ENCODE measurements at regions of chr2 and their contacts with region 1.

Region 1: GRCh38 chr2:64052468-64053241 is 33.4 kb upstream of the VPS54 start:
- DNase-seq: no peak
- H3K4me3 ChIP-seq: no peak overlapping the region
- CTCF ChIP-seq: no peak

Region 2: DNA sequence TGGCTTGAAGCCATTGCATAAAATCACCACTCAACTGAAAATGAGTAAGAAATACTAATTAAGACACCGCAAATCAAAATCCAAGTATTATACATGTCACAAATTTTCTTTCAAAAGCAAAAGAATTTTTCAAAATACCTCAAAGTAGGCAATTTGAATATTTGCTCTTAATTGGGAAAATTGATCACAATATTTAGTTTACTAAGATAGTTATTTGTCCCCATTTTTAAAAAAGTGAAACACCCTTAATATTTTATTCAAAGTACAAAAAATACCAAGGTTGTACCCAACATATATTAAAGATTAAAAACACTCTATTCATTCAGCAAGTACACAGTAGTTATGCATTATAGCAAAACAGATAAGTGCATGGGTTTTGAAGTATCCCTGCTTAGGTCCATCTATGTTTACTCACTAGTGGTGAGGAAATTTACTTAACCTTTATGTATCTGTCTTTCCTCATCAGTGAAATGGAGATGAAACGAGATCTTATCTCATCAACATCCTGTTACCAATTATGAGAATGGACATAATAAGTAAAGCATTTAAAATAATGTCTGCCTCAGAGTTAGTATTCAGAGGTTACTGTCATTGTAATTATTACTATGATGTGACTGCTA is 68.6 kb before region 1 on chr2:
- CTCF ChIA-PET with region 1: no interaction called
- POLR2A ChIA-PET with region 1: no interaction called
- DNase-seq: no peak
- H3K4me3 ChIP-seq: no peak overlapping the region
- CTCF ChIP-seq: no peak

Region 3: GRCh38 chr2:64036034-64036705 is 16.5 kb before region 1 on chr2:
- CTCF ChIA-PET with region 1: interaction called, 13 read pairs
- POLR2A ChIA-PET with region 1: no interaction called
- DNase-seq: no peak
- H3K4me3 ChIP-seq: no peak overlapping the region
- CTCF ChIP-seq: no peak

Region 4: DNA sequence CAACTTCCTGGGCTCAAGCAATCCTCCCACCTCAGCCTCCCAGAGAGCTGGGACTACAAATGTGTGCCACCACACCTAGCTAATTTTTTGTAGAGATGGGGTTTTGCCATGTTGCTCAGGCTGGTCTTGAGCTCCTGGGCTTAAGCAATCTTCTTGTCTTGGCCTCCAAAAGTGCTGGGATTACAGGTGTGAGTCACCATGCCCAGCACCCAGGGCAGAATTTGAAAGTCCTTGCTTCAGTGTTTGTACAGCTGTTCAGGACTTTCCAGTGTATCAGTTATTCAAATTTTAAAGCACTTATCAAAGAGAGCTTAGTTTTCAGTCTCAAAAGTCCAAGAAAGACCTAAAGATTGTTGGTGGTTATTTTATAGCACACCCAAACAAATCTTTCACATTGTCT is 10.2 kb after region 1 on chr2:
- CTCF ChIA-PET with region 1: interaction called, 16 read pairs
- POLR2A ChIA-PET with region 1: no interaction called
- DNase-seq: peak; percentile 29
- H3K4me3 ChIP-seq: no peak overlapping the region
- CTCF ChIP-seq: no peak

Region 5: DNA sequence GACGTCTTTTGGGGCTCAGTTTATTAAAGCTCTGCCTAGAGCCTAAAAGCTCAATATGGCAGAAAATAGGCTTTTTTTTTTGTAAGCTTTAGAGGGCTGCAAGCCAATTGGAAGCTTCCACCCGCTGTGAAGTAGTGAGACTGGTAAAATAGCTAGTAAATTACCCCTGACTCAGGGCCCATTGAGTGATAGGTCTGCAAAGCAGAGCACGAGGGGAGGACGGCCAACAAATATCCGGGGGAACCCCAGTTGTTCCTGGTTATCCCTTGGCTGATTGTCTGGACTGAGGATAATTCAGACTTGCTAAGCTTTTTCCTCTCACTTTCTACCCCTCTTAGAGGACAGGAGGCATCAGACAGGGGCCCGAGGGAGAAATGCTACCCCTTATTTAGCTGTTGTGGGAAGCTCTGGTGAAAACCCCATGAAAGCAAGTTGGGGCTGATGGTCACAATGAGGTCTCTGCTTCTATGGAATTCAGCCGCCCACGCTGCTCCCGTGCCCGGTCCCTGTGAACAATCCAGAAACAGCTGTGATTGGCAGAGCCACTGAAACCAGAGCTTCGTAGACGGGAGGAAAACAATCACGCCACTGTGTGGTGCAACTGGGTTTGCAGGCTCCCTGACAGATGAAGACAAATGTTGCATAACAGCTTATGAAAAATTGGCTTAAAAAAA is 259.4 kb after region 1 on chr2:
- CTCF ChIA-PET with region 1: interaction called, 136 read pairs
- POLR2A ChIA-PET with region 1: no interaction called
- DNase-seq: peak; percentile 37
- H3K4me3 ChIP-seq: no peak overlapping the region
- CTCF ChIP-seq: peak; percentile 67

Region 6: GRCh38 chr2:64318476-64318748 is 265.8 kb after region 1 on chr2:
- CTCF ChIA-PET with region 1: interaction called, 136 read pairs
- POLR2A ChIA-PET with region 1: no interaction called
- DNase-seq: no peak
- H3K4me3 ChIP-seq: no peak overlapping the region
- CTCF ChIP-seq: no peak

Measured in AG04449 (cell line).